Naive thymus-derived CD4-positive, alpha-beta T cell (primary cell): ENCODE measurements at regions of chr6 and their contacts with region 1.

Region 1: DNA sequence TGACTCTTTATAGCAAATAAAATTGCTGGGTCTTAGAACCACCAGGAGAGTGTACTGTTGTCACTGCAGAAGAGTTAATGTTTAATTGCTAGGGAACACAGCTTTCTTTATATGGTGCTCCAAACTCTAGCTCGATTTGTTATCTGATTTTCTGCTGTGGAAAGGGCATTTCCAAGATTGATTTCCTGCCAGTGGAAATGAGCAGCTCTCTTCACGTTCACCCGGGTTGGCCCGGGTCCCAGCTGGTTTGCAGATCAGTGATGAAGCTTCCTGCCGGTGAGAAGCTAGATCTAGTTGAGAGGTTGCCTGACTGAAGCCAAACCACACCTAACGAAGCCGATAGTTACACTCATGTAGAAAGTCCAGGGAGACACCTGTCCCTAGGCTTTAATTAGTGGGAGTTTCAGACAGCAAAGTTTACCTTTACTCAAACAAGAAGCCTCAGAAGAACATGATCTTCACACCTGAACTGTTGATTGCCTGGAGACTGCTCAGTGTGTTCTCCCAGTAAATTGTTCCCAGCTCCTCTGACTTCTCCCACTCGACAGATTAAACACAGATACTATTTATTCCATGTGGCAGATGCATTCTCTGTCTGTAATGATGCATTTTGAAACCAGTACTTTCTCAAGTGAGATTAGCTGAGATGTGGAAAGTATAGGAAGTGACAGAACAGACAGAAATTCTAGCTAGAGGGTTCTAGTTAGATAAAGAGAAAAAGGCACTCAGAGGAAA is 27.8 kb downstream of the PAQR8 start:
- DNase-seq: peak; percentile 33 to 79 (median 62)
- ATAC-seq: peak; percentile 60
- H3K4me3 ChIP-seq: peak overlapping the region; percentile 62
- H3K4me3 Mint-ChIP-seq: peak overlapping the region; percentile 75 to 89 (median 86)
- H3K27ac ChIP-seq: peak overlapping the region; percentile 89
- H3K27ac Mint-ChIP-seq: peak overlapping the region; percentile 93 to 100 (median 98)
- H3K4me1 ChIP-seq: peaks cover 59 to 75% of the 10 kb centered on the region in 2 donors
- H3K4me1 Mint-ChIP-seq: peaks cover 49 to 96% (median 90%) of the 10 kb centered on the region in 7 donors
- H3K27me3 ChIP-seq: no peaks in the 10 kb centered on the region
- H3K27me3 Mint-ChIP-seq: peaks cover 0 to 6% (median 0%) of the 10 kb centered on the region in 5 donors

Region 2: GRCh38 chr6:51827580-51827979 is 562.2 kb before region 1 on chr6:
- CTCF ChIA-PET with region 1: no interaction called
- POLR2A ChIA-PET with region 1: no interaction called
- intact Hi-C with region 1: no loop called
- DNase-seq: no peak
- ATAC-seq: no peak
- H3K4me3 ChIP-seq: no peak overlapping the region
- H3K4me3 Mint-ChIP-seq: no peak overlapping the region
- H3K27ac ChIP-seq: no peak overlapping the region
- H3K27ac Mint-ChIP-seq: no peak overlapping the region
- H3K4me1 ChIP-seq: no peaks in the 10 kb centered on the region
- H3K4me1 Mint-ChIP-seq: no peaks in the 10 kb centered on the region
- H3K27me3 ChIP-seq: no peaks in the 10 kb centered on the region
- H3K27me3 Mint-ChIP-seq: peaks cover 0 to 27% (median 5%) of the 10 kb centered on the region in 5 donors

Region 3: GRCh38 chr6:52227495-52227894 is 162.3 kb before region 1 on chr6:
- CTCF ChIA-PET with region 1: no interaction called
- POLR2A ChIA-PET with region 1: no interaction called
- intact Hi-C with region 1: loop called in 1 of 2 experiments (anchors 5 kb)
- DNase-seq: peak in 1 of 9 donors; percentile 68
- ATAC-seq: no peak
- H3K4me3 ChIP-seq: no peak overlapping the region
- H3K4me3 Mint-ChIP-seq: peak overlapping the region in 1 of 10 donors; percentile 31
- H3K27ac ChIP-seq: no peak overlapping the region
- H3K27ac Mint-ChIP-seq: peak overlapping the region in 1 of 9 donors; percentile 60
- H3K4me1 ChIP-seq: peaks cover 0 to 4% of the 10 kb centered on the region in 2 donors
- H3K4me1 Mint-ChIP-seq: peaks cover 0 to 42% (median 3%) of the 10 kb centered on the region in 7 donors
- H3K27me3 ChIP-seq: peaks cover 0 to 4% of the 10 kb centered on the region in 2 donors
- H3K27me3 Mint-ChIP-seq: peaks cover 0 to 50% (median 3%) of the 10 kb centered on the region in 5 donors

Region 4: DNA sequence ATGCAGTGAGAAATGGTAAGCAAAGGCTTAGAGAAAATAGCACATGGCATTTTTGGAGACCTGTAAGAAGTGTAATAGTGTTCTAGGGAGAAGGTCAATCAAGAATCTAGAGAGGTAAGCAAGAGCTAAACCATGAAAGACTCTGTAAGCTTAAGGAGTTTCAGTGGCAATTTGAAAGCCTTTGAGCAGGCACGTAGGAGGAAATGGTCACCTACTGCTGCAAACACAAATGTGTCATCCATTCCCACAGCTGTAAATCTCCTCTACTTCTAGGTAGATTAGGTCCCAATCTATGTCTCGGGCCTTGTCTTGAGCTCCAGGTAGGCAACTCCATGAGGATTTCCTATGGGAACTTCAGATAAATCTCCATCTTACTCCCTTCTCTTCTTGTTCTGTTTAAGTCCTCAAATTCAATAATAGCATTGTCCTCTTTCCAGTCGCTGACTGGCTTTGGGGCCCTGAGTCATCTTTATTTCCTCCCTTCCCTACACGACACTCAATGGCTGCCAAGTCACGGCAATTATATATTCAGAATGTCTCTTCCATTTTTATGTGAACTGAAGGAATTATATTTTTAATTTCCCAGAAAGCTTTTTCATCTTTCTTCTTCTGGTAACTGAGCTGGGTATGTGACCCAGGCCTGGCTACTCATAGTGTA is 52.0 kb before region 1 on chr6:
- CTCF ChIA-PET with region 1: no interaction called
- POLR2A ChIA-PET with region 1: interaction called, 5 read pairs
- intact Hi-C with region 1: loop called in 1 of 2 experiments (anchors 2 kb)
- DNase-seq: no peak
- ATAC-seq: no peak
- H3K4me3 ChIP-seq: no peak overlapping the region
- H3K4me3 Mint-ChIP-seq: peak overlapping the region in 2 of 10 donors; percentile 8 to 68
- H3K27ac ChIP-seq: no peak overlapping the region
- H3K27ac Mint-ChIP-seq: peak overlapping the region in 8 of 9 donors; percentile 11 to 94 (median 46)
- H3K4me1 ChIP-seq: peaks cover 28 to 58% of the 10 kb centered on the region in 2 donors
- H3K4me1 Mint-ChIP-seq: peaks cover 45 to 79% (median 75%) of the 10 kb centered on the region in 7 donors
- H3K27me3 ChIP-seq: no peaks in the 10 kb centered on the region
- H3K27me3 Mint-ChIP-seq: no peaks in the 10 kb centered on the region

Region 5: GRCh38 chr6:52371656-52372191 is 18.1 kb before region 1 on chr6:
- CTCF ChIA-PET with region 1: interaction called, 78 read pairs
- POLR2A ChIA-PET with region 1: interaction called, 77 read pairs
- intact Hi-C with region 1: loop called in 1 of 2 experiments (anchors 1 kb)
- DNase-seq: no peak
- ATAC-seq: no peak
- H3K4me3 ChIP-seq: no peak overlapping the region
- H3K4me3 Mint-ChIP-seq: no peak overlapping the region
- H3K27ac ChIP-seq: peak overlapping the region; percentile 10
- H3K27ac Mint-ChIP-seq: peak overlapping the region in 7 of 9 donors; percentile 17 to 84 (median 78)
- H3K4me1 ChIP-seq: peaks cover 5 to 31% of the 10 kb centered on the region in 2 donors
- H3K4me1 Mint-ChIP-seq: peaks cover 26 to 95% (median 92%) of the 10 kb centered on the region in 7 donors
- H3K27me3 ChIP-seq: no peaks in the 10 kb centered on the region
- H3K27me3 Mint-ChIP-seq: no peaks in the 10 kb centered on the region

Region 6: GRCh38 chr6:52407467-52407866 is 17.7 kb after region 1 on chr6:
- CTCF ChIA-PET with region 1: interaction called, 81 read pairs
- POLR2A ChIA-PET with region 1: interaction called, 67 read pairs
- intact Hi-C with region 1: no loop called
- DNase-seq: peak in 5 of 9 donors; percentile 27 to 52 (median 43)
- ATAC-seq: peak; percentile 84
- H3K4me3 ChIP-seq: no peak overlapping the region
- H3K4me3 Mint-ChIP-seq: no peak overlapping the region
- H3K27ac ChIP-seq: no peak overlapping the region
- H3K27ac Mint-ChIP-seq: peak overlapping the region in 7 of 9 donors; percentile 20 to 79 (median 59)
- H3K4me1 ChIP-seq: no peaks in the 10 kb centered on the region
- H3K4me1 Mint-ChIP-seq: peaks cover 7 to 81% (median 56%) of the 10 kb centered on the region in 7 donors
- H3K27me3 ChIP-seq: no peaks in the 10 kb centered on the region
- H3K27me3 Mint-ChIP-seq: peaks cover 0 to under 1% (median 0%) of the 10 kb centered on the region in 5 donors

Region 7: GRCh38 chr6:53335208-53335994 is 945.6 kb after region 1 on chr6:
- CTCF ChIA-PET with region 1: no interaction called
- POLR2A ChIA-PET with region 1: no interaction called
- intact Hi-C with region 1: loop called (anchors 5 to 10 kb)
- DNase-seq: peak; percentile 47 to 87 (median 75)
- ATAC-seq: peak; percentile 85
- H3K4me3 ChIP-seq: peak overlapping the region; percentile 50
- H3K4me3 Mint-ChIP-seq: peak overlapping the region; percentile 83 to 95 (median 88)
- H3K27ac ChIP-seq: peak overlapping the region; percentile 88
- H3K27ac Mint-ChIP-seq: peak overlapping the region; percentile 98 to 100 (median 99)
- H3K4me1 ChIP-seq: peaks cover 72 to 74% of the 10 kb centered on the region in 2 donors
- H3K4me1 Mint-ChIP-seq: peaks cover 54 to 95% (median 92%) of the 10 kb centered on the region in 7 donors
- H3K27me3 ChIP-seq: no peaks in the 10 kb centered on the region
- H3K27me3 Mint-ChIP-seq: no peaks in the 10 kb centered on the region